ENCODE measurements at regions of chr2 and their contacts with region 1.

Region 1: DNA sequence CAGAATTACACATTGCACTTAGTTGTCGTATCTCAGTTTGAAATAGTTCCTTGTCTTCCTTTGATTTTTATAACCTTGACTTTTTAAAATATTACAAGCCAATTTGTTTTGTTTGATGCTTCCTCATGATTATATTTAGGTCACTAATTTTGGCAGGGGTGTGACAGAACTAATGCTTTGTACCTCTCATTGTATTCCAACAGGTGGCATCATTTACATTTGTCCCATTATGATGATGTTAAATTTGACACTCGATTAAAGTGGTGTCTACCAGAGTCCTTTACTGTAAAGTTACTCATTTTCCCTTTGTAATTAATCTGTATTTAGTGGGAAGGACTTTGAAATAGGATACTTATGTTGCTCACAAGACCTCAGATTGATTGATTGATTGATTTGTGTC is 21.5 kb upstream of the MFSD2B start:
- DNase-seq: peak in 2 of 9 experiments; percentile 30 to 49
- ATAC-seq: no peak
- H3K4me3 ChIP-seq: no peak overlapping the region
- H3K4me3 Mint-ChIP-seq: no peak overlapping the region
- H3K27ac ChIP-seq: no peak overlapping the region
- H3K27ac Mint-ChIP-seq: no peak overlapping the region
- H3K4me1 ChIP-seq: no peaks in the 10 kb centered on the region
- H3K4me1 Mint-ChIP-seq: no peaks in the 10 kb centered on the region
- H3K27me3 ChIP-seq: no peaks in the 10 kb centered on the region
- H3K27me3 Mint-ChIP-seq: no peaks in the 10 kb centered on the region
- CTCF ChIP-seq: peak; percentile 36

Region 2: DNA sequence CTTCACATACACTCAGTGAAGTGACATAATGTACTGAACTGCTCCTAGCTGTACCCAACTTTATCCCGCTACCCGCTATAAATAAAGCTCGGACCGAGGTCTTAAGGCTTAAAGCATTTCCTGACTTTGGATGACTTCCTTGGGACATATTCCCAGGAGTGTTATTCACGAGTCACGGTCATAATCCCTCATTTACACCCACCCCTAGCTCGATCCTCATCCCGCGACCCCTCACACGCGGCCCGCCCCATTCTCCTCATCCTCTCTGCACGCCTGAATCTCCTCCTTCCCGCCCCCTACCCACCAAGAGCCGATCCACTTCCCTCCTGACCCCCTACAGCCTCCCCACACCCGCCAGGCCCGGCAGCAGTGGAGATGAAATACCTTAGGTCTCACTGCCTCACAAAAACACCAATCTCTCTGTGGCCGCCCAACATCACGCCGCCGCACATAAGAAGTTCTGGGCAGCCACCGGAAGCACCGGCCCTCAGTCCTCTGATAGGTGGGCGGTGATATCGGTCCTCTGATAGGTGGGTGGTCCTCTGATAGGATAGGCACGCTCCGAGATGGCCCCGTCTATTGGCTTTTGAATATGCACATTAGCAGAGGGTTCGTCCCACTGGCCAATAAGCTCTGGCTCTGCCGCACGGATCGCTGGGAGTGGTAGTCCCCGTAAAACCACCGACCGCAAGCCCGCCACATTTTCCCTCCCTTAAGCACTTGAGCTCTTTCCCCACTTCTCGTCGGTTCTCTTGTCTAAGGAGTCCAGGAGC is 58.7 kb after region 1 on chr2 and contains the start of gene WDCP:
- CTCF ChIA-PET with region 1: no interaction called
- POLR2A ChIA-PET with region 1: no interaction called
- intact Hi-C with region 1: loop called in 1 of 2 experiments (anchors 10 kb)
- DNase-seq: peak; percentile 81 to 98 (median 92)
- ATAC-seq: peak; percentile 98
- H3K4me3 ChIP-seq: peak within 1 kb of the TSS; percentile 80 to 87
- H3K4me3 Mint-ChIP-seq: peak within 1 kb of the TSS; percentile 93
- H3K27ac ChIP-seq: peak within 1 kb of the TSS; percentile 54 to 56
- H3K27ac Mint-ChIP-seq: peak within 1 kb of the TSS; percentile 90
- H3K4me1 ChIP-seq: peaks cover 21% of the 10 kb centered on the region
- H3K4me1 Mint-ChIP-seq: peaks cover 35% of the 10 kb centered on the region
- H3K27me3 ChIP-seq: no peaks in the 10 kb centered on the region
- H3K27me3 Mint-ChIP-seq: peaks cover 2% of the 10 kb centered on the region
- CTCF ChIP-seq: no peak
- total RNA-seq, gene WDCP: 3.7 to 4.8 TPM

Region 3: DNA sequence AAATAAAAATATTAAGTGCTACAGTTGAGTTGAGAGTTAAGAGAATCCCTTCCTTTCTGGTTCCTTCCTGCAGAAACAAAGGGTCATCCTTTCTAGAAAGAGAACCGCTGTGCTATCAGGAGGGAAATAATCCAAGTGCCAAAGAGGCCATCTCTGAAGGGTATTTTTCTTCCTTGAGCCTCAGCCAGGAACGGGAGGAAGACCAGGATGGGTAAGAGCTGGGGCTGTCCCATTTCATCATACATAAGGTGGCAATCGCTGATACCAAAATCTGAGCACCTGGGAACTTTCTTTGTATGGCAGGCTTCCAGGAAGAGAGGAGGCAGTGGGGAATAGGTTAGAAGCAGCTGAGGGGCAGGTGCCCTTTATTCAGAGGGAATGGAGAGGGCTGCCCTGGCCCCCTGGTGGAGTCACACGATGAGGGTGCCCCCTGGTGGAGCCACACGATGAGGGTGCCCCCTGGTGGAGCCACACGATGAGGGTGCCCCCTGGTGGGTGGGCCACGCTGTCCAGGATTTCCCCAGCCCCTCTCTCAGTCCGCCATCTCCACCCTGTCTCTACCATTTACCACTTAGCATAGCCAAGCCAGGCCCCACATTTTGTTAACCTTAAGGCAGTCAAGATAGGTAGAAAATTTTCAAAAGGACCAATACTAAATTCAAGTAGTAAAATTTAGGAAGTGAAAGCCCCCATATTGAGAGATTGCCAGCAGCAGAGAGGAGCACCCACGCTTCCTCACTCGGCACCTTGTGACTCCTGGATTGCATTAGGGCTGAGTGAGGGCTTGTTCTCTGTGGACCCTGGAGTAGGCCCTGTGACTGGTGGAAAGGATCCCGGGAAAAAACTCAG is 176.0 kb after region 1 on chr2:
- CTCF ChIA-PET with region 1: no interaction called
- POLR2A ChIA-PET with region 1: no interaction called
- intact Hi-C with region 1: loop called in 1 of 2 experiments (anchors 10 kb)
- DNase-seq: peak in 8 of 9 experiments; percentile 3 to 57 (median 44)
- ATAC-seq: peak; percentile 63
- H3K4me3 ChIP-seq: no peak overlapping the region
- H3K4me3 Mint-ChIP-seq: no peak overlapping the region
- H3K27ac ChIP-seq: no peak overlapping the region
- H3K27ac Mint-ChIP-seq: no peak overlapping the region
- H3K4me1 ChIP-seq: no peaks in the 10 kb centered on the region
- H3K4me1 Mint-ChIP-seq: no peaks in the 10 kb centered on the region
- H3K27me3 ChIP-seq: no peaks in the 10 kb centered on the region
- H3K27me3 Mint-ChIP-seq: no peaks in the 10 kb centered on the region
- CTCF ChIP-seq: peak; percentile 47